Activated naive CD4-positive, alpha-beta T cell treated with anti-CD3 and anti-CD28 coated beads for 36 hours (primary cell): ENCODE measurements at regions of chr10 and their contacts with region 1.

Region 1: DNA sequence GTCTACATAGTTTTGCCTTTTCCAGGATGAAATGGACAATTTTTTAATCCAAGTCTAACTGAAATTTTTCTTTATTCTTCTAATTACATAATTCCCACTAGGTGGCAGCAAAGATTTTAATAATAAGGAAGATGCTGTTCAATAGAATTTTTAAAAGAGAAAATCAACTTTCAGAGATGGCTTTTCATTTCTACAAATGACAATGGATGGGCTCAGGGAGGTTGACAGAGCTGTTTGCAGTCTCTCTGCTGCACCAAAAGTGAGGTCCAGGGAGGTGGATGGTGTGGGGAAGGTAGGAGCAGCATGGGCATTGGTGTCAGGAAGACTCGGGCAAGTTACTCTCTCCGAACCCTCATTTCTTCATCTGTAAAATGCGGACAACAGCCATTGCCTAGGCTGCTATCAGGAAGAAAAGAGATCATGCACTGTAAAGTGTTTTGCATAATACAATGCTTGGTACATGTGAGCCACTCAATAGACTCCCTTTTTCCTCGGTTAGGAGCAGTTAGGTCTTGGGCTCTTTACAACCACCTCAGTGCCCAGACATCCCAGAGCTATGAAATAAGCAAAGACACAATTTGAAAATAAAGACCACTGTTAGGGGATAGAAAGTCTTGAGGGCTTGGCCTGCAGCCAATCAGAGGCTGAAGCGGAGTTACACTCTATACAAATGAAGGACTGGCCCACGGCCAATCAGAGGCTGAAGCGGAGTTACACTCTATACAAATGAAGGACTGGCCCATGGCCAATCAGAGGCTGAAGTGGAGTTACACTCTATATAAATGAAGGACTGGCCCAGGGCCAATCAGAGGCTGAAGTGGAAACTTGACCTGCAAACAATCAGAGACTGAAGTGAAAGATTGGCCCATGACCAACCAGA is 107.1 kb downstream of the ABLIM1 start:
- DNase-seq: no peak
- H3K4me3 Mint-ChIP-seq: no peak overlapping the region
- H3K27ac Mint-ChIP-seq: no peak overlapping the region
- H3K4me1 Mint-ChIP-seq: peaks cover 18% of the 10 kb centered on the region
- H3K27me3 Mint-ChIP-seq: no peaks in the 10 kb centered on the region

Region 2: GRCh38 chr10:114486938-114487814 is 63.8 kb before region 1 on chr10:
- CTCF ChIA-PET with region 1: interaction called, 14 read pairs
- intact Hi-C with region 1: no loop called
- DNase-seq: peak; percentile 48
- H3K4me3 Mint-ChIP-seq: no peak overlapping the region
- H3K27ac Mint-ChIP-seq: peak overlapping the region; percentile 80
- H3K4me1 Mint-ChIP-seq: peaks cover 60% of the 10 kb centered on the region
- H3K27me3 Mint-ChIP-seq: no peaks in the 10 kb centered on the region

Region 3: GRCh38 chr10:114694752-114695151 is 143.8 kb after region 1 on chr10:
- CTCF ChIA-PET with region 1: interaction called, 54 read pairs
- intact Hi-C with region 1: loop called (anchors 1 kb)
- DNase-seq: peak; percentile 61
- H3K4me3 Mint-ChIP-seq: no peak overlapping the region
- H3K27ac Mint-ChIP-seq: no peak overlapping the region
- H3K4me1 Mint-ChIP-seq: peaks cover 4% of the 10 kb centered on the region
- H3K27me3 Mint-ChIP-seq: peaks cover 2% of the 10 kb centered on the region

Region 4: DNA sequence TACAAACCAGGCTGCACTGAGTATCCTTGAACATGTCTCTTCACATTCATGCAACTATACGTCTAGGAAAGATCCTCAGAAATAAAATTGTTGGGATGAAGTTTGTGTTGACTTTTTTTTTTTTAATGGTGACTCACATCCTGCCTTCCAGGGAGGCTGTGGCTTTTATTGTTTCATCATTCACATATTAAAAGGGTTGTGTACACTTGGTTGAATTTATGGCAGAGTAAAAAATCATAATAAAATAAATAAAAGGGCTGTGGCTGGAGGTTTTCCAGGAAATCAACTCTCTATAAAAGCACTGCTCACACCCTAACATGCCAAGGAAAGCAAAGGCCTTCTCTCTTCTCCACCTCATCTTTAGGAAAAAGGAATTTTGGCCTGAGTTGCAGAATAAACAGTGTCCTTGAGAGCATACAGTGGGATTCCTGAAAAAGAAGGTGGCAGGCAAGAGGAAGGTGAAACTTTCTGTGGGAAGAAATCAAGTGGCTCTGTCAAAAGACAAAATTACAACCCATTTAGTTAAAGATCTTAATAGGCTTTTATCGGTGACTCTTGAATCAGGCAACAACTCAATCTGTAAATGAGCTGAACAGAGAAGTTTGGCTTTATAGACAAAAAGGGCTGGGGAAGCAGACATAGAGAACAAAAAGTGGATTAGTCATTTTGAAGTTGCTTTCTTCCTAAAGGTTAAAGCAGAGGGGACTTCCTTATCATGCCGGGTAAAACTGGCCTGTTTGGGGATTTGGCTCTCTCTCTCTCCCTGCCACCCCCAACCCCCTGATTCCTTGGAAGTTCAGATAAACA is 229.0 kb after region 1 on chr10:
- CTCF ChIA-PET with region 1: interaction called, 45 read pairs
- intact Hi-C with region 1: no loop called
- DNase-seq: no peak
- H3K4me3 Mint-ChIP-seq: no peak overlapping the region
- H3K27ac Mint-ChIP-seq: no peak overlapping the region
- H3K4me1 Mint-ChIP-seq: peaks cover 2% of the 10 kb centered on the region
- H3K27me3 Mint-ChIP-seq: peaks cover 10% of the 10 kb centered on the region

Region 5: GRCh38 chr10:115129752-115130151 is 578.8 kb after region 1 on chr10:
- CTCF ChIA-PET with region 1: no interaction called
- intact Hi-C with region 1: loop called (anchors 1 kb)
- DNase-seq: no peak
- H3K4me3 Mint-ChIP-seq: no peak overlapping the region
- H3K27ac Mint-ChIP-seq: no peak overlapping the region
- H3K4me1 Mint-ChIP-seq: no peaks in the 10 kb centered on the region
- H3K27me3 Mint-ChIP-seq: peaks cover 7% of the 10 kb centered on the region